Ascending aorta (tissue), 2 donors: ENCODE measurements at regions of chr20 and their contacts with region 1.

Region 1: DNA sequence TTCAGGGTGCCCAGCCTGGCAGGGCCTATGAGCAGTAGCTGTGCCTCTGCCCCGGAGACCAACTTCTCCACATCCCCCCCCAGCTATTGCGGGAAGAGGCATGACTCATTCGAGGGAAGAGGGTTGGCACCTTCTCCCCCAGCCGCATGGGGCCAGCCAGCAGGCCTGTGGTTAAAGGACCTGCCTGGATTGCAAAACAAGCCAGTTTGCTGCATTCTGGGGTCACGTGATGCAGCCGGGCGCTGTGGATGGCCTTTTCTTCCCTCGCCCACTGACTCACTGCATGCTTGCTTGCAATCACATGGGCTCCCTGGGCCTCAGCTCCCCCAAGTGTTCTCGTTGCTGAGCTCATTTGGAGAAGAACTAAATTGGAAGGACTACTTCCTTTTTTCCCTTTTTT is 182.5 kb downstream of the MAFB start:
- DNase-seq: peak; percentile 96 to 98
- H3K4me3 ChIP-seq: no peak overlapping the region
- H3K27ac ChIP-seq: peak overlapping the region; percentile 62 to 67
- H3K4me1 ChIP-seq: peaks cover 0 to 14% of the 10 kb centered on the region in 2 donors
- H3K27me3 ChIP-seq: no peaks in the 10 kb centered on the region
- CTCF ChIP-seq: no peak

Region 2: DNA sequence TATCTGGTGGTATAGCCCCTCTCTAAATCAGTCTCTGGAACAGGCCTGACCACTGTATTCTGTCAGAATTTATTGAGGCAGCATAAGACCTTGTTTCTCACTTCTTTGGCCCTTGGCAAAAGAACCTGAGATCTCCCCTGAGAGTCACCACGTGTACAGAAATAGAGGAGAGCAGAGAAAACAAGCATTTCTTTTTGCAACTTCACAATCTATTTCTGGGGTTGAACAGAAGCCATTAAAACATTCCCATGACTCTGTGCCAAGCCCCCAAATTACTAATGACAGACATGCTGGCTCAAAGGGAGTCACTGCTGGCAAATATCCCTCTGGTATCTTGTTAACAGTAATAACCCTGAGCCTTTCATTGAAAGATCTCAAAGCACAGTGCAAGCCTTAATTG is 212.8 kb before region 1 on chr20:
- intact Hi-C with region 1: loop called (anchors 5 kb)
- DNase-seq: peak in 1 of 2 donors; percentile 84
- H3K4me3 ChIP-seq: no peak overlapping the region
- H3K27ac ChIP-seq: peak overlapping the region; percentile 70 to 77
- H3K4me1 ChIP-seq: peaks cover 0 to 18% of the 10 kb centered on the region in 2 donors
- H3K27me3 ChIP-seq: no peaks in the 10 kb centered on the region
- CTCF ChIP-seq: no peak

Region 3: DNA sequence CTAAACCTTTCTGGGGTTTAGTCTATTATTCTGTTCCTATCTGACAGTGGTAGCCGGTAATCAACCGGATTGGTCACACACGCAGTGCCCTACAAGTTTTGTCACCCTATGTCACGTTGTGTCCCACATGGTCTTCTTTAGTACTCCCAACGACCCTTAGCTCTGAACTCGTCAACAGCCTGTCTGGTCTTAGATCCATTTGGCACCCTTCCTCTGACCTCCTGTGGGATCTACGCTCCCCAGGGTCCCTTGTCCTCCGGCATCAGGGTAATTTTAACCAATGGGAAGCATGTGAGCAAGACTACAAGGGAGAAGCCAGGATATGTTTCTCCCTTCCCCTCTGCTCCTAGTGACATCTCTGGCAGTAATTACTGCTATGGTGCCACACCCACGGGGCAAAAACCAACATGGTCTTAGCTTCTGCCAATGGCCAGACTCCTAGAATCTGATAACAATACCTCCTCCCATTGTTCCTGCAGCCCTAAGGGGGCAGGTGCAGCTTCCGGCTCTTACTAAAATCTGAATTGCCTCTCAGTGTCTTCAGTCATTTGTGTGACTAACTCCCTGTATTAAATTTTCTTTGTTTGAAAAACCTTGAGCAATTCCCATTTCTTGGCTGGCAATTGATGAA is 125.9 kb after region 1 on chr20:
- intact Hi-C with region 1: loop called (anchors 5 kb)
- DNase-seq: no peak
- H3K4me3 ChIP-seq: no peak overlapping the region
- H3K27ac ChIP-seq: no peak overlapping the region
- H3K4me1 ChIP-seq: peaks cover 0 to 11% of the 10 kb centered on the region in 2 donors
- H3K27me3 ChIP-seq: no peaks in the 10 kb centered on the region
- CTCF ChIP-seq: no peak

Region 4: GRCh38 chr20:41339507-41340326 is 833.1 kb after region 1 on chr20:
- intact Hi-C with region 1: loop called (anchors 10 kb)
- DNase-seq: peak in 1 of 2 donors; percentile 91
- H3K4me3 ChIP-seq: peak overlapping the region; percentile 48 to 55
- H3K27ac ChIP-seq: peak overlapping the region; percentile 81 to 82
- H3K4me1 ChIP-seq: peaks cover 4 to 9% of the 10 kb centered on the region in 2 donors
- H3K27me3 ChIP-seq: no peaks in the 10 kb centered on the region
- CTCF ChIP-seq: peak; percentile 98 to 99 (median 99)

Region 5: GRCh38 chr20:41632896-41633295 is 1126.3 kb after region 1 on chr20:
- intact Hi-C with region 1: loop called (anchors 10 kb)
- DNase-seq: no peak
- H3K4me3 ChIP-seq: no peak overlapping the region
- H3K27ac ChIP-seq: peak overlapping the region in 1 of 2 donors; percentile 74
- H3K4me1 ChIP-seq: no peaks in the 10 kb centered on the region
- H3K27me3 ChIP-seq: no peaks in the 10 kb centered on the region
- CTCF ChIP-seq: no peak